MCF 10A (cell line): ENCODE measurements at regions of chr5 and their contacts with region 1.

Region 1: DNA sequence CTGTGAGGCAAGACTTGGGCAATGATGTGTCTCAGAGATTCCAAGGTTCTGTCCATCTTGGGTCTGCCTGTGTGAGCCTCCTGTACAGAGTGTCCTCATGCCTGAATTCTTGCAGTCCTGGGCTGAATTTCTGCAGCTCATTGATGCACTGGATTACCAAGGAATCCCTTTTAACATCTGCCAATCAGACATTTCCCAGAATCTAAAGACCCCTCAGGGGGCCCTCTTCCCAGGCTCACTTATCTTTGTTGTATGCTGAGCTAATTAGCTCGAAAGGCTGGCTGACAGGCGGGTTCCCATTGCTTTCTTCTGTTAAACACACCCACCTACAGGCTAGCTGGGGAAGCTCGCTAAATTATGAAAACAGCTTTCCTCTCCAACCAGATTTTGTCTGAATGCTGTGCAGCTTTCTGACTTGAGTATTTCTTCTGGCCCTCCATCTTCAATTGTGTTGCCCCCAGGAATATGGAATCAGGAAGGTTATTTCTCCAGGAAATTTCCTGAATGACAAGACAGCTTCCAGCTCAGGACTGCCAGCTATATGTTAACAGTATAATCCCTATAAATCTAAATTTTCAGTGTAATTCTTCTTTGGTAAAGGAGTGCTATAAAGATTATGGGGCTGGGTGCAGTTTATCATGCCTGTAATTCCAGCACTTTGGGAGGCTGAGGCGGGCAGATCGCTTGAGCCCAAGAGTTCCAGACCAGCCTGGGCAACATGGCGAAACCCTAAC is at the start of gene LIX1:
- DNase-seq: peak; percentile 55
- H3K4me3 Mint-ChIP-seq: no peak within 1 kb of the TSS
- H3K27ac Mint-ChIP-seq: no peak within 1 kb of the TSS
- H3K4me1 Mint-ChIP-seq: no peaks in the 10 kb centered on the region
- H3K27me3 Mint-ChIP-seq: peaks cover 37% of the 10 kb centered on the region
- CTCF ChIP-seq: peak; percentile 52
- total RNA-seq, gene LIX1: not detected in 2 replicates

Region 2: DNA sequence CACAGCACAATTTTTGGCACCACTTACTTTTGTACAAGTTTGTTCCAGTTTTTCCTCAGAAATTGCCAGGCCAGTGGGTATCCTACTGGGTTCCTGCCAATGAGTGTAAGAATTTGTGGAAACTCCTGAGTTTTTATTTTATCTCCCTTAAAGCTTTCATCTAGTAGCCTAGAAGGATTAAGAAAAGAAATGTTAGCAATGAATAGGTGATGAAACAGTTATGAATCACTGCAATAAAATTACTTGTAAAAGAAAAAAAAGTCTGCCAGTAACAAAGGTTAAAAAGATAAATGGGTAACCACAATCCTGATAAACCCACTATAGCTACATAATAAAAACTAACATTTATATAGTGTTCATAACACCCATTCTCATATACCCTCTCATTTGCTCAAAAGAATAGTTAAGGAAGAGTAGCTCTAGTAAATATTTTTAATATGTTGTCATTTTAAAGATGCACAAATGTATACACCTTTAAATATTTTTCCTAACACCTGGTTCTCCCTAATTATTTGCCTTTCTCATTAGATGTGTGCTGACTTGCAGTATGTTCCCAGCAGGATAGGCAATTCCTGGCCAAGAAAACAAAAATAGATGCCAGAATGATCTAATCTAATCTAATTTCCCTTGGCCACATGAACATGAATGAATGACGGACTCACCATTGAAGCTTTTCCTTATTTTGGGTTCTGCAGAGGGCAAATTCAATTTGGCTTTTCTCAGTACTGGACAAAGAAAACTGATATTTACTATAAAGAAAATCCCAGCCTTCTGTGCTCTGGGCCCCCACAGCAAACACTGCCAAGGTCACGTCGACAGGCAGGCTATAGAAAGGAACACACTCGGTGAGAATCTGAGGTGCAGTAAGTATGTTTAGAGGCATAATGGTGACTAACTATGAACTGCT is 361.4 kb before region 1 on chr5:
- CTCF ChIA-PET with region 1: interaction called, 10 read pairs
- POLR2A ChIA-PET with region 1: interaction called, 3 read pairs
- intact Hi-C with region 1: no loop called
- DNase-seq: peak; percentile 69
- H3K4me3 Mint-ChIP-seq: no peak overlapping the region
- H3K27ac Mint-ChIP-seq: peak overlapping the region; percentile 76
- H3K4me1 Mint-ChIP-seq: peaks cover 18% of the 10 kb centered on the region
- H3K27me3 Mint-ChIP-seq: no peaks in the 10 kb centered on the region
- CTCF ChIP-seq: no peak

Region 3: DNA sequence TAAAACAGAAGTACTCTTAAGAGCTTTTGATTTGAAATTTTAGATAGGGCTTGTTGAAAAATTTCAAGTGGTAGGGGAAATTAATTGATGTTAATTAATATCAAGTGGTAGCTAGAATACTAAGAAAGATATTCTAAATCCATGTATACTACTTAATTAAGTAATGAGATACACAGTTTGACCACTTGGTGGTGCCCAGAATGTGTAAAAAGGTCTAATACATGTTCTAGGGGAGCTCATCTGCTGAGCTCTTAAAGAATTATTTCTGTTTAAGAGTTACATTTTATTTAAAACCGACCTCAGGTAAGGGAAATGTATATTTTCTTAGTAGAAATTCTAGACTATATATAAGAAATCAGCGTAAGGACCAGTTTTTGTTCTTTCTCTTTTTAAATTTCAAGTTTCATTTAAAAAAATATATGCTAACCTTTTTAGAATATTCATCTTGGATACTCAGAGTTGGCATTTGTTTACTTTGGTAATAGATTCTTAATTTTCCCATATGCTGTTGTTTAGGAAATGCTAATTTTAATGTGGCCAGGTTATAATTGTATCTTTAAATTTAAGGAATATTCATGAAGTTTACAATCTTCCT is 145.3 kb before region 1 on chr5:
- CTCF ChIA-PET with region 1: interaction called, 20 read pairs
- POLR2A ChIA-PET with region 1: no interaction called
- intact Hi-C with region 1: loop called (anchors 1 kb)
- DNase-seq: peak; percentile 50
- H3K4me3 Mint-ChIP-seq: no peak overlapping the region
- H3K27ac Mint-ChIP-seq: no peak overlapping the region
- H3K4me1 Mint-ChIP-seq: no peaks in the 10 kb centered on the region
- H3K27me3 Mint-ChIP-seq: no peaks in the 10 kb centered on the region
- CTCF ChIP-seq: peak; percentile 36

Region 4: GRCh38 chr5:97568382-97568781 is 425.7 kb after region 1 on chr5:
- CTCF ChIA-PET with region 1: no interaction called
- POLR2A ChIA-PET with region 1: no interaction called
- intact Hi-C with region 1: no loop called
- DNase-seq: no peak
- H3K4me3 Mint-ChIP-seq: no peak overlapping the region
- H3K27ac Mint-ChIP-seq: no peak overlapping the region
- H3K4me1 Mint-ChIP-seq: no peaks in the 10 kb centered on the region
- H3K27me3 Mint-ChIP-seq: no peaks in the 10 kb centered on the region
- CTCF ChIP-seq: no peak

Region 5: DNA sequence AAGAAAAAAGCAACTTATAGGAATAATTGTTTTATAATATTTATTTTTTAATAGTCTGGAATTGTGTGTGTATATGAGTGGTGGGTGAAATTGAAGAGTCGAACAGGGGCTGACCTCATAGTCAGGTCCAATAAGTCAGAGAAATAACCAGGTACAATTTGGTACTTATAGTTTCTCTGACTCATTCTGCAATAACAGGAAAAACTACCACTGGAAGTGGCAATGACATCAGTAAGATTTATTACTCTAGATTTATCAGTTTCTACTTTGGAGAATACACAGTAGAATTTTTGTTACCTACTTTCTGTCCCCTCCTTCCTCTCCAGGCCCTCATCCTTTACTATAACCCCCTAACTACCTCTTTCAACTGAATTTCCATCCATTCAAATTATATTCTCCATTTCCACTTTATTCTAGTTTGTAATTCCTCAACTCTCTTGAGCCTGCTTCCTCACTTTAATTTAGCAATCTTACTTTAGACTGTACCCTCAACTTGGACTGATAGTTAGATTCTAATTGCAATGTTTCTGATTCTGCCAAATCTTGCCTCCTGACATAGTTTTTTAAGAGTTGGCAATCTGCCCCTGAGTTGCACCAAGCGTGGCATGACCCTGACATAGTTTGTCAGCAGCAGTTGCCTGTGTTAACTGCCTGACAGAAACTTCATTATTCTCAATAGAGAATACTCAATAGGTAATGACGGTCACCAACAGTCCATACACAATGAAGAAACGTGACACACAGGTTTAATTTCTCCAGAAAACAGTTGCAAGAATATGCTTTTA is 515.6 kb after region 1 on chr5:
- CTCF ChIA-PET with region 1: no interaction called
- POLR2A ChIA-PET with region 1: no interaction called
- intact Hi-C with region 1: no loop called
- DNase-seq: no peak
- H3K4me3 Mint-ChIP-seq: no peak overlapping the region
- H3K27ac Mint-ChIP-seq: no peak overlapping the region
- H3K4me1 Mint-ChIP-seq: peaks cover 6% of the 10 kb centered on the region
- H3K27me3 Mint-ChIP-seq: no peaks in the 10 kb centered on the region
- CTCF ChIP-seq: no peak